ENCODE measurements at regions of chr6 and their contacts with region 1.

Region 1: GRCh38 chr6:32940656-32941213 is at the start of gene HLA-DMB:
- DNase-seq: peak; percentile 97
- ATAC-seq: peak; percentile 74
- H3K4me3 ChIP-seq: peak within 1 kb of the TSS; percentile 79
- H3K27ac ChIP-seq: peak within 1 kb of the TSS; percentile 96
- H3K4me1 ChIP-seq: peaks cover 41% of the 10 kb centered on the region
- H3K27me3 ChIP-seq: no peaks in the 10 kb centered on the region
- CTCF ChIP-seq: no peak
- EP300 ChIP-seq: no peak
- POLR2A ChIP-seq: peak; percentile 71
- RAD21 ChIP-seq: no peak
- polyA plus RNA-seq, gene HLA-DMB: 117 to 170 TPM

Region 2: GRCh38 chr6:32439602-32440214 is 501.0 kb before region 1 on chr6 and contains the start of gene HLA-DRA:
- CTCF ChIA-PET with region 1: no interaction called
- POLR2A ChIA-PET with region 1: no interaction called
- RAD21 ChIA-PET with region 1: no interaction called
- SMC1A ChIA-PET with region 1: no interaction called
- in situ Hi-C with region 1: no loop called
- intact Hi-C with region 1: loop called (anchors 10 kb)
- DNase-seq: peak; percentile 99
- ATAC-seq: peak; percentile 71
- H3K4me3 ChIP-seq: peak within 1 kb of the TSS; percentile 99
- H3K27ac ChIP-seq: peak within 1 kb of the TSS; percentile 100
- H3K4me1 ChIP-seq: peaks cover 29% of the 10 kb centered on the region
- H3K27me3 ChIP-seq: no peaks in the 10 kb centered on the region
- CTCF ChIP-seq: no peak
- EP300 ChIP-seq: peak; percentile 66 to 68; a peak in 3 of 4 replicates
- POLR2A ChIP-seq: peak; percentile 95
- RAD21 ChIP-seq: no peak
- polyA plus RNA-seq, gene HLA-DRA: 4,131 to 6,024 TPM

Region 3: GRCh38 chr6:32853541-32854375 is 87.0 kb before region 1 on chr6 and contains the starts of genes PSMB9 and TAP1:
- CTCF ChIA-PET with region 1: no interaction called
- POLR2A ChIA-PET with region 1: interaction called, 17 read pairs
- RAD21 ChIA-PET with region 1: interaction called, 3 read pairs
- SMC1A ChIA-PET with region 1: interaction called, 3 read pairs
- in situ Hi-C with region 1: no loop called
- intact Hi-C with region 1: no loop called
- DNase-seq: peak; percentile 89
- ATAC-seq: peak; percentile 88
- H3K4me3 ChIP-seq: peak within 1 kb of the TSS; percentile 88
- H3K27ac ChIP-seq: peak within 1 kb of the TSS; percentile 100
- H3K4me1 ChIP-seq: peaks cover 32% of the 10 kb centered on the region
- H3K27me3 ChIP-seq: no peaks in the 10 kb centered on the region
- CTCF ChIP-seq: peak; percentile 79 to 84 (median 83)
- EP300 ChIP-seq: no peak
- POLR2A ChIP-seq: peak; percentile 83
- RAD21 ChIP-seq: peak; percentile 78
- polyA plus RNA-seq, gene PSMB9: 202 to 299 TPM
- polyA plus RNA-seq, gene TAP1: 33.4 to 60.0 TPM

Region 4: DNA sequence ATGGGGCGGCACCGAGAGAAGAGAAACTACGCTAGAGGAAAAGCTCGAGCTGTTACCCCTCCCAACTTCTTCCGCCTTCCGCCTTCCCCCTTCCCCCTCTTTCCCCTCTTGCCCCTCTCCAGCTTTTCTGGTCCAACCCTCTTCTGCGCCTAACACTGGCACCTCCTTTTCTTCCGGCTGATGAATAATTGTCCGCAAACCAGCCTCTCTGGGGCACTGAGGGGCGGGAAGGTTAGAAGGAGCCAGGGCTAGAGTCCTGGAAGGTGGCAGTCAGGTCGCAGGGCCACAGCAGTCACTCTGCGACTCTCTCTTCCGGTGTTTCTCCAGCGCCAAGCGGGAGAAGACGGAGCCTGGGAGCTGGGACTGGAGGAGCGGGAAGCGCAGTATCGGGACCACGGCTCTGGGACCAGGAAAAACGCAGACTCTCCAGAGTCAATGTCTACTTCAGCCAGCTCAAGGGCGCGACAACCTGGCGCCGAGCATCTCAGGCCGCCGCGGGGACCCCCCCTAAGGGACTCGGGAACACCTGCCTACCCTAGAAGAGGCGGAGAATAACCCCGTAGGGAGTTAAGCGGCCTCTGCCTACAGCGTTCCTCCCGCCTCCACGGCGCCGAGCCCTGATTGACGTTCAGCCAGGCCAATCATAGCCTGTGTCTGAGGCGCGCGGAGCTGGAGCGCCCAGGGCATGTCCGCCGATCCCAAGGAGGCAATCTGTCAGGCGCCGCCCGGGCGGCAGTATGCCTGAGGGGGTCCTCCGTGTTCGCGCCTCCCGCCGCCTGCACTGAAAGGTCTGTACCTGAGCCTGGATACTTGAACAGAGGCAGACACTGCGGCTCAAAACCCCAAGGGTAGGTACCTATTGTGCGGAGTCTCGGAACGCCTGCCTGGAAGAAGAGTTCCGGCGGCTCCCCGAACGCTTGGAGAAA is 46.4 kb before region 1 on chr6:
- CTCF ChIA-PET with region 1: interaction called, 4 read pairs
- POLR2A ChIA-PET with region 1: interaction called, 23 read pairs
- RAD21 ChIA-PET with region 1: interaction called, 22 read pairs
- SMC1A ChIA-PET with region 1: interaction called, 16 read pairs
- in situ Hi-C with region 1: no loop called
- intact Hi-C with region 1: loop called (anchors 1 kb)
- DNase-seq: peak; percentile 91
- ATAC-seq: peak; percentile 98
- H3K4me3 ChIP-seq: peak overlapping the region; percentile 81
- H3K27ac ChIP-seq: peak overlapping the region; percentile 90
- H3K4me1 ChIP-seq: peaks cover 12% of the 10 kb centered on the region
- H3K27me3 ChIP-seq: no peaks in the 10 kb centered on the region
- CTCF ChIP-seq: no peak; a peak in 1 of 6 replicates
- EP300 ChIP-seq: no peak
- POLR2A ChIP-seq: peak; percentile 83
- RAD21 ChIP-seq: no peak

Region 5: GRCh38 chr6:32952817-32953739 is 12.3 kb after region 1 on chr6 and contains the start of gene HLA-DMA:
- CTCF ChIA-PET with region 1: interaction called, 532 read pairs
- POLR2A ChIA-PET with region 1: interaction called, 183 read pairs
- RAD21 ChIA-PET with region 1: interaction called, 130 read pairs
- SMC1A ChIA-PET with region 1: interaction called, 354 read pairs
- in situ Hi-C with region 1: no loop called
- intact Hi-C with region 1: no loop called
- DNase-seq: peak; percentile 99
- ATAC-seq: peak; percentile 94
- H3K4me3 ChIP-seq: peak within 1 kb of the TSS; percentile 98
- H3K27ac ChIP-seq: peak within 1 kb of the TSS; percentile 90
- H3K4me1 ChIP-seq: peaks cover 44% of the 10 kb centered on the region
- H3K27me3 ChIP-seq: no peaks in the 10 kb centered on the region
- CTCF ChIP-seq: peak; percentile 71 to 77 (median 74)
- EP300 ChIP-seq: peak; percentile 32 to 67; a peak in 3 of 4 replicates
- POLR2A ChIP-seq: peak; percentile 98
- RAD21 ChIP-seq: peak; percentile 46
- polyA plus RNA-seq, gene HLA-DMA: 389 to 552 TPM